Endothelial cell of umbilical vein (primary cell): ENCODE measurements at regions of chr5 and their contacts with region 1.

Region 1: DNA sequence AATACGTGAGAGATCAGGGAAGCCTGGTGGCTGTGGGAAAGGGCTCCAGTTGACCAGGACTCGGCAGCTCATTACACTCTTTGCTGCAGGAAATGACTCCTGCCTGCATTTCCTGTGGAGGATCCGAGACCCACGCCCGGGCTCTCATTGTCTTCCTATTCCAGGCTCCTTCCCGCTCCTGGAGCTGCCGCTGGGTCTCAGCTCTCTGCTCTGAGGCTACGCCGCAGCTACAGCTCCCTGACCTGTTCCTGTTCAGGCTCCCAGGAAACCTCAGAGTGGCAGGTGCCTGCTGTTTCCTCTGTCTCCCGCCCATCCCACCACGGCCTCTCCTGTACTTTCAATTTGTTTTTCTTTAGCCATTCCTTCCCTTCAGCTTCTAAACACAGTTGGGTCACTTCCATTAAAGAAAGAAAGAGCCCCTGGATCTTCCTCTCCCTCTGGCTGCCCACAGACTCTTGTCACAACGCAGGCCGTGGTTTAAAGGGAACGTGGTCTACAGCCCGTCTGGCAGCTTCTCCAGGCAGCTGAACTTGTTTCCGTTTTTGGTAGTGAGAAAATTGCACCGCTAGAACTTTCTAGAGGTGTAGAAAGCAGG is 71.5 kb downstream of the IL6ST start:
- DNase-seq: peak; percentile 87
- H3K4me3 ChIP-seq: peak overlapping the region in 2 of 3 experiments; percentile 10 to 26
- H3K27ac ChIP-seq: peak overlapping the region; percentile 89
- H3K4me1 ChIP-seq: peaks cover 38% of the 10 kb centered on the region
- H3K27me3 ChIP-seq: no peaks in the 10 kb centered on the region
- CTCF ChIP-seq: no peak
- POLR2A ChIP-seq: peak; percentile 81

Region 2: DNA sequence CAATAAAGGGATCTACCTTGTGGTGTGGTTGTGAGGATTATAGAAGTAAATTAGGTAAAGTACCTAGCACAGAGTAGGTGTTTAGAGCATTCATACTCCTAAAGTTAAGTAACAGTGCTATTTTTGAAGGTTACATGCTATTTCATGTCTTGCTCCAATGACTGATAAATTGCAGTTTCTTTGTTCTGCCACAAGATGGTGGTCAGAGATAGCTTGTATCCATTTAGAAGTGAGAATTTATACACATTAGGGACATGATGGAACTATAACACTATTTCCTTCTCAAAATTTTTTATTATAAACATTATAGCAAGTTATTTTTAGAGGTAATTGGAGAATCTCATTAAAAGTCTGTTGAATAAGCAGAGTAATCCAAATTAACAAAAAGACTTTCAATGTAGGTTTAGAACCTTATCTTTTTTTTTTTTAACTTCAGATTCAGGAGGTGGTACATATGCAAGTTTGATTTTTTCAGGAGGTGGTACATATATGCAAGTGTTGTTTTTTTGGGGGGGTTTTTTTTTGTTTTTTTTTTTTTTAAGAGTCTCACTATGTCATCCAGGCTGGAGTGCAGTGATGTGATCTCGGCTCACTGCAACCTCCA is 598.4 kb before region 1 on chr5:
- CTCF ChIA-PET with region 1: no interaction called
- POLR2A ChIA-PET with region 1: no interaction called
- dilution Hi-C with region 1: no loop called
- intact Hi-C with region 1: loop called (anchors 5 kb)
- DNase-seq: peak; percentile 67
- H3K4me3 ChIP-seq: no peak overlapping the region
- H3K27ac ChIP-seq: no peak overlapping the region
- H3K4me1 ChIP-seq: no peaks in the 10 kb centered on the region
- H3K27me3 ChIP-seq: no peaks in the 10 kb centered on the region
- CTCF ChIP-seq: peak; percentile 43 to 47
- POLR2A ChIP-seq: no peak

Region 3: DNA sequence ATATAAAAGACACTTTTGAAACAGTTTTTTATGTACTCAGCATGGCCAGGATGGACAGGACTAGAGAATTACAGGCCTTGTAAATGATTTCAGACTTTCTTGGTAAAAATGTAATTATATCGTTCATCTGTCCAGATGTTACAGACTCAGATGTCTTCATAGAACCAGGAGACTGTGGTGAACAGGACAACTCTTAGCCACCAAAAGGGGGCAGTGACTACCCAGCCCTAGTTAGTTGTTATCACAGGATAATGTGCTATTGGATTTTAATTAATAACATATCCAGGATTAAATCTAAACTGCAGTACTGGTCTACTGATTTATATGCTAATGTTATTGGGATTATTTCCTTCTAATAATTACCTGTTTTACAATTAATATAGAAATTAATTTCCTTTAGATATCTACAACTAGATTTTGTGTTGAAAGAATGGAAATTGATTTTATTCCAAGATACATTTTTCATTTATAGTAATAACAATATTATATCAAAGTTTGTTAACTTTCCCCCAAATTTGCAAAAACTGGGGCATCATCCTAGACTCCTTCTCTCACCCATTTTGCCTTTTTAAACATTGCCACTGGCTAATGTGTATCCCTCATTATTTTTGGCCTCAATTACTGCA is 516.1 kb before region 1 on chr5:
- CTCF ChIA-PET with region 1: interaction called, 3 read pairs
- POLR2A ChIA-PET with region 1: no interaction called
- dilution Hi-C with region 1: no loop called
- intact Hi-C with region 1: loop called (anchors 5 kb)
- DNase-seq: peak; percentile 54
- H3K4me3 ChIP-seq: no peak overlapping the region
- H3K27ac ChIP-seq: no peak overlapping the region
- H3K4me1 ChIP-seq: no peaks in the 10 kb centered on the region
- H3K27me3 ChIP-seq: no peaks in the 10 kb centered on the region
- CTCF ChIP-seq: peak; percentile 46 to 64
- POLR2A ChIP-seq: no peak

Region 4: DNA sequence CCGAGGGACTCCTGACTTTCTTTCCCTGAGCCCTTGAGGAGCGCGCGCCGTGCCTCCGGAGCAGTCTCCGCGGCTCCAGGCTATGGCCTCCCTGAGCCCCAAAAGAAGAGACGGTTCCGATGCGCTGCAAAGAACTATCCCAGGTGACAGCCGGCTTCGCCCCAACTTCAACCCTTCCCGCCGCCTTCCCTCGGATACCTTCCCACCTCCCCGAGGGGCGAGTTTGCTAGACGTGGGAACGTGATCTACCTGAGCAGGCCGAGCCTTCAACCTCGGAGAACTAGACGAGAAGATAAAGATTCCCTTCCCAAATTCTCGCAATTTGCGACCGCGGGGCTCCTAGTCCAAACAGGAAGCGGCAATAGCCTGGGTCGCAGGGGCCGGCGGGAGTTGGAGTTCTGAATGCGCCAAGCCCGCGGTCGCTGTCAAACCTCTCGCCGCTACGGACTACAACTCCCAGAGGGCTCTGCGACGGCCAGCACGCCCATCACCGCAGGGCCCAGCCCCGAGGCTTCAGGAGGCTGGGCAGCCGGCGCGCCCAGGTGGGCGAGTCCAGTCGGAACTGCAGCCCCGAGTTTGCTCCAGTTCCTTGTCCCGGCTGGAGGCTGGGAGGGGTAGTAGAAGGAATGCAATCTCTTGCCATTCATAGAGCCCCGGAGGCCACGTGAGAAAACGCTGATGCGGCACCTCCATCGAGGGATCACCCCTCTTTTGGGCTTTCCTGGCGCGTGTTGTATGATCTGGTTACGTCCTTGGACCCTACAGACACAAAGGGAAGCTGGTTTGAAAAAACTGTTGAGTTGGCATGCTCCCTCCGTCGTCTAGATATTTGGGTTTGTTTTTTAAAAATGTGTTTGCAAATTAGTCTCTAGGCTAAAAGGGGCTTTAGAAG is 211.1 kb before region 1 on chr5 and contains the start of gene SLC38A9:
- CTCF ChIA-PET with region 1: interaction called, 4 read pairs
- POLR2A ChIA-PET with region 1: no interaction called
- dilution Hi-C with region 1: no loop called
- intact Hi-C with region 1: loop called (anchors 1 kb)
- DNase-seq: peak; percentile 93
- H3K4me3 ChIP-seq: peak within 1 kb of the TSS; percentile 66 to 81 (median 81)
- H3K27ac ChIP-seq: peak within 1 kb of the TSS; percentile 19
- H3K4me1 ChIP-seq: peaks cover 9% of the 10 kb centered on the region
- H3K27me3 ChIP-seq: no peaks in the 10 kb centered on the region
- CTCF ChIP-seq: no peak
- POLR2A ChIP-seq: peak; percentile 93
- total RNA-seq, gene SLC38A9: 24.9 and 29.0 TPM in 2 replicates

Region 5: DNA sequence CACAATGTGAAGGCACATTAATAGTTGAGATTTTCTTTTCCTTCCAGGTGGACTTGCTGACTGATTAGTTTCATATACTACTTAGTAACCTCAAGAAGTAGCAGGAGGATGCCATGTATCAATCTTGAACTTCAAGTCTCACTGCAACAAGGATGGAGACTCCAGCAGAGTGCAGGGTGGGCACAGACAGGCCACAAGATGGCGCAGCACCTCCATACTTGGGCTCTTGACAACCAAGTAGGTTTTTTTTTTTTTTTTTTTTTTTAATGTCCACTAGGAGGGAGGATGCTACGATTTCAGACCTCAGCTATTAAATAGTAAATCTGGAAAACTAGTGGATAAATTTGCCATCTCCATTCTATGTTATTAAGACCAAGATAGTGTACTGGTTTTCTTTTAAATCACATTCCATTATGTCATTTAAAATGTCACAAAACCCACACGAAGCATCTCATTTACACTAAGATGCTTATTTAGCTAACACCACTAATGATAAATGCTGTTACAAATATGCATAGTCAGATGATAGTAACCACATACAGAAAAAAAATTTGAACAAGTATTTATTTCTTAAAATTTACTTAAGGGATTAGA is 12.9 kb after region 1 on chr5:
- CTCF ChIA-PET with region 1: interaction called, 14 read pairs
- POLR2A ChIA-PET with region 1: no interaction called
- dilution Hi-C with region 1: no loop called
- intact Hi-C with region 1: no loop called
- DNase-seq: peak; percentile 88
- H3K4me3 ChIP-seq: no peak overlapping the region
- H3K27ac ChIP-seq: no peak overlapping the region
- H3K4me1 ChIP-seq: no peaks in the 10 kb centered on the region
- H3K27me3 ChIP-seq: no peaks in the 10 kb centered on the region
- CTCF ChIP-seq: peak; percentile 82 to 94
- POLR2A ChIP-seq: no peak